ENCODE measurements at regions of chr22 and their contacts with region 1.

Region 1: GRCh38 chr22:50185384-50186087 is at the start of gene TRABD:
- DNase-seq: peak in 1 of 2 donors; percentile 92
- H3K4me3 ChIP-seq: peak within 1 kb of the TSS; percentile 72 to 77
- H3K27ac ChIP-seq: peak within 1 kb of the TSS; percentile 42 to 67
- H3K4me1 ChIP-seq: peaks cover 5 to 33% of the 10 kb centered on the region in 2 donors
- H3K27me3 ChIP-seq: no peaks in the 10 kb centered on the region
- CTCF ChIP-seq: no peak
- total RNA-seq, gene TRABD: 91.4 TPM

Region 2: GRCh38 chr22:49960159-49961004 is 225.2 kb before region 1 on chr22 and contains the start of gene PIM3:
- intact Hi-C with region 1: loop called (anchors 5 kb)
- DNase-seq: peak; percentile 79 to 96
- H3K4me3 ChIP-seq: peak within 1 kb of the TSS; percentile 85 to 89
- H3K27ac ChIP-seq: peak within 1 kb of the TSS; percentile 88 to 96
- H3K4me1 ChIP-seq: peaks cover 0 to 18% of the 10 kb centered on the region in 2 donors
- H3K27me3 ChIP-seq: no peaks in the 10 kb centered on the region
- CTCF ChIP-seq: peak in 1 of 3 experiments; percentile 33
- total RNA-seq, gene PIM3: 269 TPM

Region 3: DNA sequence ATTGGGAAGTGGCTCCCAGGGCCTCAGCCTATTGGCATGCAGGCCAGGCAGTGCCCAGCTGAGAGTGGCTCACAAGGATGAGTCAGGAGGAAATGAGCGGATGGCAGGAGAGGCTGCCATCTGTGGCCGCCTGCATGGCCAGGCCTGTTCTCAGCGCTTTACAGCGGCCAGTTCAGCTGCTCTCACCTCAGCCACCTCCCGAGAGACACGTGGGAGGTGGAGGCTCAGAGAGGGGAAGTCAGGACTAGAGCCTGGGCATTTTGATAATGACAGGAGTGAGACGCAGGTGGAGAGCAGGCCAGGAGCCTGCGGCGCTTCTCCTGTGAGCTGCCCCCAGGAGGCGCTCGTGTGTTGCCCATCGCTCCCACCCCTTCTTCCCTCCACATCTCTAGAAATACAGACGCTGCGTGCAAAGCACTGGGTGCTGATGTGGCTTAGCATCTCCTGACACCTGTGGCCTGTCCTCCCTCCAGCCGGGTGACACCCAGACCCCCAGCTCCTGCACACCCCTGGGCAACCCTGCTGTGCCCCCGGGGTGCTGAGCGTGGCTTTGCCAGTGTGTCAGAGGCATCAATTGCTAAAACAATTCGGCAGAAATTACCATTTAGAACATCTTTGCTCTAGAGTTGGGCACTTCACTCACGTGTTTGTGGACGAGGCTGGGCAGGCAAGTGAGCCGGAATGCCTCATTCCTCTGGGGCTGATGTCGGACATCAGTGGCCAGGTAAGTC is 36.4 kb before region 1 on chr22:
- intact Hi-C with region 1: no loop called
- DNase-seq: no peak
- H3K4me3 ChIP-seq: no peak overlapping the region
- H3K27ac ChIP-seq: no peak overlapping the region
- H3K4me1 ChIP-seq: no peaks in the 10 kb centered on the region
- H3K27me3 ChIP-seq: peaks cover 4% of the 10 kb centered on the region
- CTCF ChIP-seq: peak; percentile 8 to 65 (median 37)

Measured in ascending aorta (tissue), 2 donors.